ENCODE measurements at regions of chr13 and their contacts with region 1.

Region 1: DNA sequence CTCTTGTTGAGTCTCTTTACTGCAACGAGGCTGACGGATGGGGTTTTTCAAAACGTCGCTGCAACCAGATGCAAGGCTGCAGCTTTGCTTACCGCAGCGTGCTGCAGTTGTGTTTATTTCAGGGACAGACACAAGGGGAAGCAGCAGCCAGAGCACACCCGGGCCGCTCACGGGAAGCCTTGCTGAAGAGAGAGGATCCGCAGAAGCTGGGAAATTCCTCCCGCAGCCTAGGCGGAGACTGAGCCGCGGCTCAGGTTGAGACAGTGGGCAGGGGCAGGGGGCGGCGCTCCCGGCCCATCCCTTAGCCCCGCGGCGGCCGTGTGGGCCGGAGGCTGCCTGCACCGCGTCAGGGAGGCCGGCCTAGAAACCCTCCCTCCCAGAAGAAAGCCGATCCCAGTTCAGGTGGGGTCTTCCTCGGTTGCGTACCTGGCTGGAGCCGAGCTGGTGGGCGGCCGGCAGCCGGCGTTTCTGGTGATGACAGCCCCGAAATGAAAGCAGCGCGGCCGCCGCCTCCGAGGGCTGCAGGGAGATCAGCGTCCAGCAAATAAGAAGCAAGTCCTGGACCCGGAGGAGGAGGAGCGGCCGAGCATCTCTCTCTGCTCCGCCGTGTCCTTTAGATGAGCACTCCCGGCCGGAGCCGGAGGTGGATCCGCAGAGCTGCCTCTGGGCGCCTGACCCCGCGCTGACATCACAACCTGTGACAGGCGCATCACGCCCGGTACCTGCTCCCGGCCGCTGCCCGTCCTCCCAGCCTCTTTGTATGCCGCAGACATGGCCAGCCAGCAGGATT is at the start of gene FRY:
- DNase-seq: peak; percentile 44
- H3K4me3 Mint-ChIP-seq: peak within 1 kb of the TSS; percentile 94
- H3K27ac Mint-ChIP-seq: peak within 1 kb of the TSS; percentile 82
- H3K4me1 Mint-ChIP-seq: peaks cover 52% of the 10 kb centered on the region
- H3K27me3 Mint-ChIP-seq: peaks cover 6% of the 10 kb centered on the region
- total RNA-seq, gene FRY: 2.4 and 3.2 TPM in 2 replicates

Region 2: GRCh38 chr13:31930901-31931522 is 100.2 kb before region 1 on chr13:
- intact Hi-C with region 1: no loop called
- DNase-seq: peak; percentile 48
- H3K4me3 Mint-ChIP-seq: no peak overlapping the region
- H3K27ac Mint-ChIP-seq: no peak overlapping the region
- H3K4me1 Mint-ChIP-seq: peaks cover 17% of the 10 kb centered on the region
- H3K27me3 Mint-ChIP-seq: peaks cover 4% of the 10 kb centered on the region

Region 3: DNA sequence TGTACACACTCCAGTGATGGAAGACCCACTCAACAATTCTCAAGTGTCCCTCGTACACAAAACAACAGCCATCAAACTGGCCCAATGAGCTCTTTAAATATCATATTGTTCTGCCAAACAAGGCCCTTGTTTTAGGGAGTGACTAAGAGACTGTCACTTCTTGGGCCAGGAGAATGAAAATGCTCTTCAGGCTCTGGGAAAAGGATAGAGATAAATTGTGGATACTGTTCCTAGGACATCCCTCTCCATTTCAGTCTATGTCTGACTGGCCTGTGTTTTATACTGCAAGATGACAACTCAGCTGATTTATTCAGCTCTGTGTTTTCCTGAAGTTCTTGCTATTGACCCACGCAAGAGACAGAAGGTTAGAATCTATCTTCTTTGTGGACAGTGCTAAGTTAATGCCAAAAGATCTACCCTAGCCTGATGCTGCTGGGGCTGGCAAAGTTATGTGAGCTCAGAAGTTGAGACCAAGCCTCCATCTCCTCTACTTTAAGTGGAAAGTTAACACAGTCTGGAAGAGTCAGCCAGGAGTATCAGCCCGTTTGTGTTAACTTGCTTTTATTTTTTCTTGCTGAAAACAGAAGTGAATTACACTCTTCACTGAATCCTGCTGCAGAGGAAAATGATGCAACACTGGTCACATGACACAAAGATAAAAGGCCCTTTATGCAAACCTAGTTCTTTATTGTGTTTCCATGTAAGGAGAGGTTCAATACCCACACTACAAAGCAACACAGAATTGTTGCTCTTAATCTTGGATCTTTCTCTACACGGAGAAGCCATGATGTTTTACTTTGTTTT is 15.0 kb after region 1 on chr13:
- intact Hi-C with region 1: loop called (anchors 2 kb)
- DNase-seq: peak; percentile 9
- H3K4me3 Mint-ChIP-seq: peak overlapping the region; percentile 43
- H3K27ac Mint-ChIP-seq: peak overlapping the region; percentile 79
- H3K4me1 Mint-ChIP-seq: peaks cover 68% of the 10 kb centered on the region
- H3K27me3 Mint-ChIP-seq: no peaks in the 10 kb centered on the region

Region 4: GRCh38 chr13:33828431-33829129 is 1797.4 kb after region 1 on chr13:
- intact Hi-C with region 1: loop called (anchors 10 kb)
- DNase-seq: no peak
- H3K4me3 Mint-ChIP-seq: no peak overlapping the region
- H3K27ac Mint-ChIP-seq: peak overlapping the region; percentile 80
- H3K4me1 Mint-ChIP-seq: peaks cover 31% of the 10 kb centered on the region
- H3K27me3 Mint-ChIP-seq: no peaks in the 10 kb centered on the region